ENCODE measurements at regions of chr1 and their contacts with region 1.

Region 1: DNA sequence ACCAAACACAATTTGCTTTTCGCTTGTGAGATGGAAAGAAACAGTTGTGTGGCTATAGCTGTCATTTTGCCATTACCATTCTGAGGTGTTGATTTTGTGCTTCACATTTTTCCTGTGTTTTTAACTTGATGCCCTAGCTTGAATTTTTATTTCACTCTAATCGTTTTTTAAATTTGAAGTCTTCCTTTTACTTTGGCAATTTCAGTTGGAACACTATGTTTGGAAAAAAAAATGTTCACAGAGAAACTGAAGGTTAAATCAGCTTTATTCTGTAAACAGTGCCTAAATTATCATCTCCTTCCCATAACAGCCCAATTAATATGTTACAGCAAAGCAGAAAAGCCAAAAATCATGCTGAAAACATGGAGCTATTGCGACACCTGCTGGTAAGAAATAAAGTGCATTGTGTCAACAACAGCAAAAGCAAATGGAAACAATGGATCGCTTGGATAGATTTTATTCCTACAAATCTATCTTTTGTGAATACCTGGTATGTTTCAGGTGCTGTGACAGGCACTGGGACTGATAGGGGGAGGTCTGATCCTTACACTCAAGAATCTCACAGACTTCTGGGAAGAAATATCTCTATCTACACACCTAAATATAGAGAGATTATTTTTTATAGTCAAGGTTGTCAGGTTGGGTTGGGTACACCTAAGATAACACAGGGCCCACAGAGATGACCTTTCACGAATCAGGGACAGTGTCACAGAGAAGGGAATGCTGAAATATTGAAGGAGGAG is 16.2 kb upstream of the ERICH3 start:
- H3K4me3 Mint-ChIP-seq: no peak overlapping the region
- H3K27ac Mint-ChIP-seq: no peak overlapping the region
- H3K4me1 Mint-ChIP-seq: peaks cover 13% of the 10 kb centered on the region
- H3K27me3 Mint-ChIP-seq: no peaks in the 10 kb centered on the region

Region 2: GRCh38 chr1:74468982-74469603 is 220.7 kb before region 1 on chr1:
- intact Hi-C with region 1: loop called (anchors 5 kb)
- H3K4me3 Mint-ChIP-seq: no peak overlapping the region
- H3K27ac Mint-ChIP-seq: no peak overlapping the region
- H3K4me1 Mint-ChIP-seq: no peaks in the 10 kb centered on the region
- H3K27me3 Mint-ChIP-seq: no peaks in the 10 kb centered on the region

Region 3: DNA sequence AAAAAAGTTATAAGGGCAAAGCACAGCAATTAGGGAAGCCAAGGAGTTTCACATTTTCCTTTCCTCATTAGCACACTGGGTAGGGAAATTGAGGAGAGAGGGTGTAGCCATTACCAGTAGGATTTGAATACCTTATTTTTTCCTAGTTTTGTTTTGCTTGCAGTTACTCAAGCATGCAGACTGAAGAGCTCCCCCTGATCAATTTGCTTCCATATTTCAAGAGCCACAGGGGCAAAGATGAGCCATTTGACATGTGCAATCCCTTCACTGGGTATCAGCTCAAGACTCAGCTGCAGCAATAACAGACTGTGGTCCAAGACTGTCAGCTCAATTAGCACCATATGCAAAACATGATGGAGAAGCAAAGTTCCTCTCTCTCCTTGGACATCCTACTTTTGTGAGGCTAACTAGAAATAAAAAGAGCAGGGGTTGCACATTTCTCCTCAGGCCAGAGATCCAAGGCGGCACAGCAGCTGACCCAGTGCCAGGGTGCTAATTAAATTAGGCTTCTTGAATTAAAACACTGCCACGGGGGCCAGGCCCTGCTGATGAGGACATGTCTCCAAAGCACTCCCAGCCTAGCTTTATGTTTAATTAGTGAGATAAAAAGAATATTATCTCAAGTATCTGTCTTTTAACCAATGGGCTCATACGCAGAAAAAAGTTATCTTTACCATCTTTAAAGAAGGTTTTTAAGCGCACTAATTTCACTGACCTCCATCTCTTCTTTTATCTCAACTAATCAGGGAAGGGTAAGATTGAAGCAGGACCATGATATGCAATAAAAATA is 140.6 kb before region 1 on chr1:
- intact Hi-C with region 1: no loop called
- H3K4me3 Mint-ChIP-seq: no peak overlapping the region
- H3K27ac Mint-ChIP-seq: no peak overlapping the region
- H3K4me1 Mint-ChIP-seq: no peaks in the 10 kb centered on the region
- H3K27me3 Mint-ChIP-seq: no peaks in the 10 kb centered on the region

Region 4: GRCh38 chr1:74733604-74734484 is 44.1 kb after region 1 on chr1:
- intact Hi-C with region 1: no loop called
- H3K4me3 Mint-ChIP-seq: peak overlapping the region; percentile 89
- H3K27ac Mint-ChIP-seq: peak overlapping the region; percentile 91
- H3K4me1 Mint-ChIP-seq: peaks cover 31% of the 10 kb centered on the region
- H3K27me3 Mint-ChIP-seq: no peaks in the 10 kb centered on the region